ENCODE measurements at regions of chr3 and their contacts with region 1.

Region 1: DNA sequence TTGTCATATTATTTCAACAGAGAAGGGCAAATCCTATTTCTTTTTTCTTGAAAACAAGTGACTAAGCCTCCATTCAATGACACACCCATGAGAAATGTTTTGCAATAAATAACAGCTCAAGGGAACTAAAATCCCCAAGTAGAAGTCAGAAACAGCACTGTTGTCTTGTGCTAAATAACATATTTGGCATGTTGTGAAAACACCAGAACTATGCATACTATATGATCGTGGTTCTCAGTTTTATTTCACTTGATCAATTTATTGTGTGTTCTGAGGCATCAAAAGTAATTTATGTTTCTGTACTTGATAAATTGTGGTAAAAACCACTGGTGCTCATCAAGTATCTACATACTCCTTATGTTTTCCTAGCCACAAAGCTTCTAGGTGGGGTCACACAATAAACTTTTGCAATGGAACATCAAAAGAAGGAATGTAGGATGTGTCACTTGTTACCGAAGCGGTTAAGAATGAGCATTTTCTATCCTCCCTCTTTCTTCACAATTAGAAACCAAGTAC is 691.7 kb upstream of the CBLB start:
- DNase-seq: no peak
- ATAC-seq: no peak

Region 2: GRCh38 chr3:106491796-106492195 is 68.7 kb before region 1 on chr3:
- intact Hi-C with region 1: loop called (anchors 5 kb)
- DNase-seq: no peak
- ATAC-seq: no peak

Region 3: GRCh38 chr3:106534206-106534605 is 26.3 kb before region 1 on chr3:
- intact Hi-C with region 1: no loop called
- DNase-seq: no peak
- ATAC-seq: no peak

Region 4: GRCh38 chr3:106759731-106760130 is 199.2 kb after region 1 on chr3:
- intact Hi-C with region 1: no loop called
- DNase-seq: no peak
- ATAC-seq: no peak

Region 5: DNA sequence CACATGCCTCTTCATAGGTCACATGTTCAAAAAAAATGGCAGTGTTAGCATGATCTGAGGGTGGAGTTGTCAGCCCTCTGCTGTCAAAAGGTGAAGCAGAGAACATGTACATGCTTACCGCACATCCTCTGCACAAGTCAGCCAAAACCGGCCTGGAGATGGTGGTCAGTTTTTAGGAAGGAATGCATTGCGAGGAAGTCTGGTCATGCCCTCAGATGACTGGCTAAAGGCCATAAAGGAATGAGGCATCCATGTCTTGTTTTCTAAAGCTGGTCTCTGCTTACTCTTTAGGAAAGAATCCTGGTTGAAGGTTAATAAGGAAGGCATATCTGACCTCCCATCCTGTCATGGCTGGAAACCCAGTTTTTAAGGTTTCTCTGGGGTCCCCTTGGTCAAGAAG is 524.8 kb after region 1 on chr3:
- intact Hi-C with region 1: no loop called
- DNase-seq: no peak
- ATAC-seq: no peak

Measured in sciatic nerve (tissue), 2 donors.